ENCODE measurements at regions of chr10 and their contacts with region 1.

Region 1: DNA sequence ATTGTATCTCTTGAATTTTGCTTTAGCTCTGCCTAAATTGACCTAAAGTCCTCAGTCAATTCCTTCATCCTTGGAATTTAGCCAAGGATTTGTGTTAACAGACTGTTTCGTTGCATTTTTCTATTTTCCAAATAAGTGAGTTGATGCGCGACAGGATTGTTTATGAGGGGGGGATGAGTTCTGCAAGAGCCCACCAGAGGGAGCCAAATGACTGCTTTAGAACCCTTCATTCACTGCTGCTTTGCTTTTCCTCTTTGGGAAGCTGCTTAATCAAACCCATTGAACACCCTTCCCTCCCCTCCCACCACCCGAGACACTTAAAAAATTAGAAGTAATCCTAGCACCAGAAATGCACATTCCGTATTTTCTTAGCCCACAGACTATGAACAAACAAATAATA is 33.7 kb upstream of the PTF1A start:
- DNase-seq: peak; percentile 58
- ATAC-seq: peak; percentile 93
- H3K4me3 ChIP-seq: no peak overlapping the region
- H3K27ac ChIP-seq: no peak overlapping the region
- H3K4me1 ChIP-seq: no peaks in the 10 kb centered on the region
- H3K27me3 ChIP-seq: peaks cover 2% of the 10 kb centered on the region; the same call in 1 of the 2 replicates
- CTCF ChIP-seq: peak; percentile 89
- POLR2A ChIP-seq: no peak
- RAD21 ChIP-seq: peak; percentile 86

Region 2: GRCh38 chr10:23217471-23217870 is 59.1 kb after region 1 on chr10:
- CTCF ChIA-PET with region 1: no interaction called
- POLR2A ChIA-PET with region 1: no interaction called
- dilution Hi-C with region 1: no loop called
- in situ Hi-C with region 1: no loop called
- intact Hi-C with region 1: no loop called
- DNase-seq: no peak
- ATAC-seq: no peak
- H3K4me3 ChIP-seq: no peak overlapping the region
- H3K27ac ChIP-seq: no peak overlapping the region
- H3K4me1 ChIP-seq: no peaks in the 10 kb centered on the region
- H3K27me3 ChIP-seq: no peaks in the 10 kb centered on the region
- CTCF ChIP-seq: no peak
- POLR2A ChIP-seq: no peak
- RAD21 ChIP-seq: no peak

Region 3: GRCh38 chr10:23293145-23293724 is 134.9 kb after region 1 on chr10:
- CTCF ChIA-PET with region 1: interaction called, 8 read pairs
- POLR2A ChIA-PET with region 1: no interaction called
- dilution Hi-C with region 1: no loop called
- in situ Hi-C with region 1: no loop called
- intact Hi-C with region 1: loop called (anchors 1 kb)
- DNase-seq: peak; percentile 9
- ATAC-seq: peak; percentile 49
- H3K4me3 ChIP-seq: no peak overlapping the region
- H3K27ac ChIP-seq: no peak overlapping the region
- H3K4me1 ChIP-seq: no peaks in the 10 kb centered on the region
- H3K27me3 ChIP-seq: peaks cover 7% of the 10 kb centered on the region
- CTCF ChIP-seq: peak; percentile 43
- POLR2A ChIP-seq: no peak
- RAD21 ChIP-seq: peak; percentile 33

Region 4: GRCh38 chr10:23702977-23703414 is 544.6 kb after region 1 on chr10:
- CTCF ChIA-PET with region 1: no interaction called
- POLR2A ChIA-PET with region 1: no interaction called
- dilution Hi-C with region 1: no loop called
- in situ Hi-C with region 1: no loop called
- intact Hi-C with region 1: loop called (anchors 1 kb)
- DNase-seq: peak; percentile 52
- ATAC-seq: peak; percentile 94
- H3K4me3 ChIP-seq: no peak overlapping the region
- H3K27ac ChIP-seq: no peak overlapping the region
- H3K4me1 ChIP-seq: no peaks in the 10 kb centered on the region
- H3K27me3 ChIP-seq: no peaks in the 10 kb centered on the region
- CTCF ChIP-seq: peak; percentile 54
- POLR2A ChIP-seq: no peak
- RAD21 ChIP-seq: peak; percentile 66

Region 5: DNA sequence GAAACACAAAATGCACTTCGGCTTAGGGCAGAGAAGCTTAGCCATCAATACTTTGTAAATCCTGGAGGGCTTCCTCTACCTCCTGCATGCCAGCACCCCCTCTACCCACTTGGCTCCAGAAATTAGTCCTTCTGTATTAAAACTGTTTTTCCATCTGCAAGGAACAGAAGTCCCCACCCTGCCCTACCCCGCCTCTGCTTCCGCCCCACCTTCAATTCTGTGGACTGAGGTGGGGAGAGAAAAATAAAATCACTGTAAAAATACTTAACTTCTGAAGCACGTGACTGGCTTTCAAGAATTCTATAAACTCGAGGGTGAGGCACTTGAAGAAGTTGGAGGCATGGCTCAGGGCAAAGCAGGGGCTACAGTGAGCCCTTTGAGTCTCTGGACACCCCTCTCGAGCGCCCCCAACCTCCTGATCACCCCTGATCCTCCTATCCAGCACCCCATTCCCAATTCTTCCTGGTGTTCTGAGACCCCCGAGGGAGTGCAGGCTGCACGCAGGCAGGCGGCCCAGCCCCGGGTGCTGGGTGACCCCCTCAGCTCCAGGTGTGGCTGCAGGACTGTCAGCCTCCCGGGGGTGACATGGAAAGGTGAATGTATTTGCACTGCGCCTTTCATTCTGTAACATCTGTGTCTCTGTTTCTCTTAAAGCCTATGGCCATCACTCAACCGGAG is 1043.3 kb after region 1 on chr10:
- CTCF ChIA-PET with region 1: no interaction called
- POLR2A ChIA-PET with region 1: no interaction called
- dilution Hi-C with region 1: no loop called
- in situ Hi-C with region 1: loop called (anchors 25 kb)
- intact Hi-C with region 1: loop called (anchors 1 kb)
- DNase-seq: no peak
- ATAC-seq: no peak
- H3K4me3 ChIP-seq: no peak overlapping the region
- H3K27ac ChIP-seq: no peak overlapping the region
- H3K4me1 ChIP-seq: no peaks in the 10 kb centered on the region
- H3K27me3 ChIP-seq: peaks cover 2% of the 10 kb centered on the region; the same call in 1 of the 2 replicates
- CTCF ChIP-seq: no peak
- POLR2A ChIP-seq: no peak
- RAD21 ChIP-seq: no peak

Region 6: GRCh38 chr10:24360282-24361127 is 1202.1 kb after region 1 on chr10:
- CTCF ChIA-PET with region 1: no interaction called
- POLR2A ChIA-PET with region 1: no interaction called
- dilution Hi-C with region 1: no loop called
- in situ Hi-C with region 1: loop called (anchors 25 kb)
- intact Hi-C with region 1: loop called (anchors 1 kb)
- DNase-seq: peak; percentile 73
- ATAC-seq: peak; percentile 88
- H3K4me3 ChIP-seq: no peak overlapping the region
- H3K27ac ChIP-seq: no peak overlapping the region
- H3K4me1 ChIP-seq: no peaks in the 10 kb centered on the region
- H3K27me3 ChIP-seq: no peaks in the 10 kb centered on the region
- CTCF ChIP-seq: peak; percentile 79
- POLR2A ChIP-seq: no peak
- RAD21 ChIP-seq: peak; percentile 90

Region 7: GRCh38 chr10:24518981-24519597 is 1360.7 kb after region 1 on chr10:
- CTCF ChIA-PET with region 1: no interaction called
- POLR2A ChIA-PET with region 1: no interaction called
- dilution Hi-C with region 1: no loop called
- in situ Hi-C with region 1: loop called (anchors 25 kb)
- intact Hi-C with region 1: loop called (anchors 1 kb)
- DNase-seq: peak; percentile 60
- ATAC-seq: peak; percentile 90
- H3K4me3 ChIP-seq: no peak overlapping the region
- H3K27ac ChIP-seq: no peak overlapping the region
- H3K4me1 ChIP-seq: no peaks in the 10 kb centered on the region; the same call in 1 of the 2 replicates
- H3K27me3 ChIP-seq: no peaks in the 10 kb centered on the region
- CTCF ChIP-seq: peak; percentile 84
- POLR2A ChIP-seq: no peak
- RAD21 ChIP-seq: peak; percentile 89